ENCODE measurements at regions of chr11 and their contacts with region 1.

Region 1: DNA sequence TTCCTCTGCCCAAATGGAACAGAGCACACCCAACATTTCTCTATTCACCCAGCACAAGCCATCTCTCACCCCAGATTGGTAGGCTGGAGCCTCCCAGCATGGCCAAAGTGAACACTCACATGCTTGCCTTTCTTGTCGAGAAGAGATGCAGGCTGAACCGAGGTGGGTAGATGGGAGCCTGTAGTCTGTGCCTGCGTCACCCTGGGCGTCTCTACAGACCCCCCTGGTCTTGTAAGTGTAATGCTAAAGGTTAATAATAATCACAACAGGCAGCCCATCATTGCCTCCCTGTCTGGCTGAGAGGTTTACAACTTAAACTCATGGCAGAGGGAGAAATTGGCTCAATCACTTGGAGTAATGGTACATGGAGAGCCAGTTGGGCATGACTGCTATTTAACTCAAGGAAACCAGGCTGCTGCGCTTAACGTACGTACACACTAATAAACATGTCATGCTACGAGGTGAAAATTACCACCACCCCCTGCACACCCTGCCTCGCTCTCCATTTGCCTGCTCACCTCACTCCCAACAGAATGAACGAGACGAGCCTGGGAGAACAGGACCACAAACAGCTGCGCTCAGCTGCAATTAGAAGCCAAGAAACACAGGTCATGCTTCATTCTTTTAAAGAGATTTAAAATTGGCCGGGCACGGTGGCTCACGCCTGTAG is 9.1 kb upstream of the ZBTB16 start:
- DNase-seq: peak; percentile 93
- H3K4me3 ChIP-seq: no peak overlapping the region
- H3K27ac ChIP-seq: peak overlapping the region in 3 of 4 donors; percentile 74 to 80 (median 77)
- H3K4me1 ChIP-seq: peaks cover 0 to 46% (median 15%) of the 10 kb centered on the region in 4 donors
- H3K27me3 ChIP-seq: no peaks in the 10 kb centered on the region
- CTCF ChIP-seq: no peak
- EP300 ChIP-seq: peak; percentile 98 to 99 (median 99)
- POLR2A ChIP-seq: no peak

Region 2: GRCh38 chr11:114036156-114036811 is 14.1 kb before region 1 on chr11:
- intact Hi-C with region 1: loop called (anchors 1 kb)
- DNase-seq: peak; percentile 95
- H3K4me3 ChIP-seq: peak overlapping the region; percentile 16 to 44 (median 43)
- H3K27ac ChIP-seq: peak overlapping the region; percentile 60 to 82 (median 74)
- H3K4me1 ChIP-seq: peaks cover 0 to 32% (median 25%) of the 10 kb centered on the region in 4 donors
- H3K27me3 ChIP-seq: no peaks in the 10 kb centered on the region
- CTCF ChIP-seq: peak; percentile 76 to 86 (median 83)
- EP300 ChIP-seq: no peak
- POLR2A ChIP-seq: no peak

Region 3: GRCh38 chr11:114348200-114349191 is 298.1 kb after region 1 on chr11:
- intact Hi-C with region 1: no loop called
- DNase-seq: no peak
- H3K4me3 ChIP-seq: no peak overlapping the region
- H3K27ac ChIP-seq: no peak overlapping the region
- H3K4me1 ChIP-seq: no peaks in the 10 kb centered on the region
- H3K27me3 ChIP-seq: no peaks in the 10 kb centered on the region
- CTCF ChIP-seq: peak; percentile 13 to 64 (median 34)
- EP300 ChIP-seq: no peak
- POLR2A ChIP-seq: no peak